Sigmoid colon (tissue), 7 donors: ENCODE measurements at regions of chr5 and their contacts with region 1.

Region 1: GRCh38 chr5:169302491-169303118 is 1.7 kb upstream of the SLIT3 start:
- DNase-seq: peak; percentile 91
- H3K4me3 ChIP-seq: no peak overlapping the region
- H3K27ac ChIP-seq: peak overlapping the region in 3 of 4 donors; percentile 82 to 91 (median 88)
- H3K4me1 ChIP-seq: peaks cover 0 to 47% (median 32%) of the 10 kb centered on the region in 4 donors
- H3K27me3 ChIP-seq: peaks cover 0 to 9% (median 0%) of the 10 kb centered on the region in 3 donors
- CTCF ChIP-seq: peak; percentile 78 to 85 (median 80)
- EP300 ChIP-seq: no peak
- POLR2A ChIP-seq: no peak

Region 2: DNA sequence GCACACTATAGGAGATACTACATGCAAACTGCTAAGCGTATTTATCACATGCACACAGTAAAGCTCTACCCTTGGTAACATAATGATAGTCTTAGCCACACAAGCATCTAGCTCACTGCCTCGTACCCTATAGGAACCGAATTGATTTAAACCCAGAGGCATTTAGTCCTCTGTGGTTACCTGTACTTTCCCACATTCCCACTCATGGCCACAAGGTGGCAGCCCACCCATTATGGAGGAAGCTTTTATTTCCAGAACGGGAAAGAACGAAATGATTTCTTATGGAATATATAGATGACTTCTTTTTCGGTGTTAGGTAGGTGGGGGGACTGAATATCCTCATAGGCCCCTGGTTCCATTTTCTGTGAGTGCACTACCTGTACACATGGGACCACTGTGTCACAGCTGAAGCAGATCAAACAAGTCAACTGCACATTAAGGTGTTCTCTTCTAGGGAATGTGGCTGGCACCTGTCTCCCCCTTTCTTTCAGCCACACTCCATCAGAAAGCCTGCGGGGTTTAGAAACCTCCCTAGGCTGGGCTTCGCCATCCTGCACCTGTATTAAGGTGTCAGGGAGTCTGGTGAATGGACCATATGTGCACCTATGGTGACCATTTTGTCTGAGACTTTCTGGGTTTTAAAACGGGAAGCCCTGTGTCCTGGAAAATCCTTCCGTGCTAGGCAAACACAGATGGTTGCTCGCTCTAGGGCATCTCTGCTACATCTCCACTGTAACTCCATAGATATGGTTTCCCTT is 314.9 kb before region 1 on chr5:
- intact Hi-C with region 1: loop called (anchors 1 kb)
- DNase-seq: peak; percentile 79
- H3K4me3 ChIP-seq: no peak overlapping the region
- H3K27ac ChIP-seq: no peak overlapping the region
- H3K4me1 ChIP-seq: peaks cover 0 to 7% (median 0%) of the 10 kb centered on the region in 4 donors
- H3K27me3 ChIP-seq: no peaks in the 10 kb centered on the region
- CTCF ChIP-seq: peak; percentile 77 to 93 (median 85)
- EP300 ChIP-seq: no peak
- POLR2A ChIP-seq: no peak

Region 3: DNA sequence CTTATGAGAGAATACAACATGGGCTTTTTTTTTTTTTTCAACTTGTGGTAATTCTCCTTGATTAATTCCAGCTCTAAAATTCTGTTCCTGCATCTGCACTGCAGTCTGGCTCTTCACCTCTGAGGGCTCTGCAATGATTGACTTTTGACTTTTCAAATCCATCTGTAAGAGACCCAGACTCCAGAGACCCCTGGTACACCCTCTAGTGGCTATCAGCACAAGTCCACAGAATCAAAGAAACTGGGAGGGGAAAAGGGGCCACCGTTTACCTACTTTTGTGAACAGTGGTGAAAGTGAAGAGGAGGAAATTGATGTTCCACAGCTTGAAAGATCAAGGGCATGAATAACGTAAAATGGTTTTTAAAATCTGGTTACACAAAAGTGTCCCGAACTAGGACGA is 153.3 kb before region 1 on chr5:
- intact Hi-C with region 1: loop called (anchors 5 kb)
- DNase-seq: no peak
- H3K4me3 ChIP-seq: no peak overlapping the region
- H3K27ac ChIP-seq: no peak overlapping the region
- H3K4me1 ChIP-seq: peaks cover 0 to 70% (median 56%) of the 10 kb centered on the region in 4 donors
- H3K27me3 ChIP-seq: no peaks in the 10 kb centered on the region
- CTCF ChIP-seq: no peak
- EP300 ChIP-seq: no peak
- POLR2A ChIP-seq: no peak

Region 4: GRCh38 chr5:169251333-169252084 is 51.1 kb before region 1 on chr5:
- intact Hi-C with region 1: no loop called
- DNase-seq: no peak
- H3K4me3 ChIP-seq: no peak overlapping the region
- H3K27ac ChIP-seq: no peak overlapping the region
- H3K4me1 ChIP-seq: no peaks in the 10 kb centered on the region
- H3K27me3 ChIP-seq: no peaks in the 10 kb centered on the region
- CTCF ChIP-seq: no peak
- EP300 ChIP-seq: no peak
- POLR2A ChIP-seq: no peak

Region 5: GRCh38 chr5:169374761-169375160 is 72.2 kb after region 1 on chr5:
- intact Hi-C with region 1: no loop called
- DNase-seq: no peak
- H3K4me3 ChIP-seq: no peak overlapping the region
- H3K27ac ChIP-seq: no peak overlapping the region
- H3K4me1 ChIP-seq: no peaks in the 10 kb centered on the region
- H3K27me3 ChIP-seq: no peaks in the 10 kb centered on the region
- CTCF ChIP-seq: no peak
- EP300 ChIP-seq: no peak
- POLR2A ChIP-seq: no peak

Region 6: DNA sequence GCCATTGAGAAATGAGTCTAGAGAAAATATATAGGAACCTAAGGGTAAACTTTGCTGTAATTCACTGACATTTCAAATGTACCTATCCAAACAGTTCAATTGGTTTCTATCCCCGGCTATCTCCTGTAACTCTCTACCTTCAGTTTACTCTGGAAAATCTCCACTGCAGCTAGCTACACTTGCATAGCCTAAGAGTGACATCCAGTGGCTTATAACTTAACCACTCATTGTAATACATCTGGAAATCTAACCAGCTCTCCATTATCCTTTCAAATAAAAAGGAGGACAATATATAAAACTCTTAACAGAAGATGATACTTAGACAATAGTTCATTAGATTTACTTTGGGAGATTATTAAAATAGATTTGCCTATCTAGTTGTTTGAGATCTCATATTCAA is 245.7 kb after region 1 on chr5:
- intact Hi-C with region 1: loop called (anchors 10 kb)
- DNase-seq: no peak
- H3K4me3 ChIP-seq: no peak overlapping the region
- H3K27ac ChIP-seq: no peak overlapping the region
- H3K4me1 ChIP-seq: no peaks in the 10 kb centered on the region
- H3K27me3 ChIP-seq: peaks cover 0 to 9% (median 0%) of the 10 kb centered on the region in 3 donors
- CTCF ChIP-seq: peak in 2 of 4 experiments; percentile 15 to 36
- EP300 ChIP-seq: no peak
- POLR2A ChIP-seq: no peak